PC-3 (cell line): ENCODE measurements at regions of chr14 and their contacts with region 1.

Region 1: GRCh38 chr14:91383439-91383838 is 34.2 kb downstream of the CCDC88C start:
- DNase-seq: peak; percentile 82
- ATAC-seq: peak; percentile 70
- H3K4me3 ChIP-seq: no peak overlapping the region; the same call in 1 of the 2 replicates
- H3K27ac ChIP-seq: peak overlapping the region; percentile 88
- H3K4me1 ChIP-seq: peaks cover 33% of the 10 kb centered on the region
- H3K27me3 ChIP-seq: no peaks in the 10 kb centered on the region
- CTCF ChIP-seq: no peak

Region 2: GRCh38 chr14:91249841-91250616 is 133.4 kb before region 1 on chr14:
- CTCF ChIA-PET with region 1: no interaction called
- POLR2A ChIA-PET with region 1: no interaction called
- intact Hi-C with region 1: no loop called
- DNase-seq: peak; percentile 75
- ATAC-seq: peak; percentile 71
- H3K4me3 ChIP-seq: no peak overlapping the region
- H3K27ac ChIP-seq: 0 out of 2 replicates have a peak overlapping the region, but pooled peaks have one; percentile 19
- H3K4me1 ChIP-seq: peaks cover 19% of the 10 kb centered on the region
- H3K27me3 ChIP-seq: no peaks in the 10 kb centered on the region
- CTCF ChIP-seq: no peak

Region 3: GRCh38 chr14:91346851-91347199 is 36.6 kb before region 1 on chr14:
- CTCF ChIA-PET with region 1: no interaction called
- POLR2A ChIA-PET with region 1: no interaction called
- intact Hi-C with region 1: loop called (anchors 2 kb)
- DNase-seq: no peak
- ATAC-seq: no peak
- H3K4me3 ChIP-seq: no peak overlapping the region
- H3K27ac ChIP-seq: peak overlapping the region; percentile 59
- H3K4me1 ChIP-seq: peaks cover 16% of the 10 kb centered on the region
- H3K27me3 ChIP-seq: no peaks in the 10 kb centered on the region
- CTCF ChIP-seq: no peak